Gastrocnemius medialis (tissue), 4 donors: ENCODE measurements at regions of chr7 and their contacts with region 1.

Region 1: DNA sequence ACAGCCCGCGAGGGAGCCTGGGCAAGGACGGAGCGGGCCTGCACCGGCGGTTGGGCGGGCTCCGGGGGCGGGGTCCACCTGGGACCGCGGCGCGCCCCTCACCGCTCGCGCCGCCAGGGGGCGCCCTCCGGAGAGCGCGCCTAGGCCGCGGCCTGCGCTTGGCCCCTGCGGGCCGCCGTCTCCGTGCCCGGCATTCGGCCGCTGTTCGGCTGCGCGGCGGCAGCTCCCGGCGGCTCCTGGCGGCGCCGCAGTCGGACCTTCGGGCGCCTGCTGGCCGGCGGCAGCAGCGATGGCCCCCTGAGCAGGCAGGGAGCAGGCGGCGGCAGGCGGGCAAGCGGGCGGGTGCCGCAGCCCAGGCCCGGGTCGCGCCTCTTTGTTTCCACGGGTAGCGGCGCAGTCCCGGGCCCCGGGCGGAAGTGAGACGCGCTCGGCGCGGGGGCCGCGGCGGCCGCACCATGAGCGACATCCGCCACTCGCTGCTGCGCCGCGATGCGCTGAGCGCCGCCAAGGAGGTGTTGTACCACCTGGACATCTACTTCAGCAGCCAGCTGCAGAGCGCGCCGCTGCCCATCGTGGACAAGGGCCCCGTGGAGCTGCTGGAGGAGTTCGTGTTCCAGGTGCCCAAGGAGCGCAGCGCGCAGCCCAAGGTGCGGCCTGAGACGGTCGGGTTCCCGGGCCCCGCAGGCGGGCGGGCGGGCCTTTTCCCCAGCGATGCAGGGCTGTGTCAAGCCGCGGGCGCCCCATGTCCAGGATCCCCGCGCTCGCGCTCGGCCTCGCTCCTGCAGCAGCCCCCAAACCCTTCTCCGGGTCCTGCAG is at the start of gene INTS15:
- DNase-seq: peak; percentile 18 to 50
- ATAC-seq: peak; percentile 89 to 92
- H3K4me3 ChIP-seq: peak within 1 kb of the TSS; percentile 71 to 90 (median 82)
- H3K27ac ChIP-seq: peak within 1 kb of the TSS; percentile 68 to 90 (median 82)
- H3K4me1 ChIP-seq: peaks cover 14 to 15% of the 10 kb centered on the region in 2 donors
- H3K27me3 ChIP-seq: no peaks in the 10 kb centered on the region
- CTCF ChIP-seq: peak; percentile 52 to 99 (median 98)
- POLR2A ChIP-seq: peak; percentile 80 to 85
- total RNA-seq, gene INTS15: 20.1 to 30.4 (median 26.1) TPM

Region 2: GRCh38 chr7:6577365-6578113 is 12.5 kb before region 1 on chr7 and contains the start of gene ZDHHC4:
- in situ Hi-C with region 1: no loop called
- intact Hi-C with region 1: loop called (anchors 1 kb)
- DNase-seq: peak; percentile 69 to 84
- ATAC-seq: peak; percentile 94 to 97
- H3K4me3 ChIP-seq: peak within 1 kb of the TSS; percentile 70 to 88 (median 77)
- H3K27ac ChIP-seq: peak within 1 kb of the TSS; percentile 85 to 95 (median 92)
- H3K4me1 ChIP-seq: peaks cover 0 to 5% of the 10 kb centered on the region in 2 donors
- H3K27me3 ChIP-seq: no peaks in the 10 kb centered on the region
- CTCF ChIP-seq: no peak
- POLR2A ChIP-seq: peak; percentile 87 to 92
- total RNA-seq, gene ZDHHC4: 52.7 to 88.6 (median 70.5) TPM

Region 3: DNA sequence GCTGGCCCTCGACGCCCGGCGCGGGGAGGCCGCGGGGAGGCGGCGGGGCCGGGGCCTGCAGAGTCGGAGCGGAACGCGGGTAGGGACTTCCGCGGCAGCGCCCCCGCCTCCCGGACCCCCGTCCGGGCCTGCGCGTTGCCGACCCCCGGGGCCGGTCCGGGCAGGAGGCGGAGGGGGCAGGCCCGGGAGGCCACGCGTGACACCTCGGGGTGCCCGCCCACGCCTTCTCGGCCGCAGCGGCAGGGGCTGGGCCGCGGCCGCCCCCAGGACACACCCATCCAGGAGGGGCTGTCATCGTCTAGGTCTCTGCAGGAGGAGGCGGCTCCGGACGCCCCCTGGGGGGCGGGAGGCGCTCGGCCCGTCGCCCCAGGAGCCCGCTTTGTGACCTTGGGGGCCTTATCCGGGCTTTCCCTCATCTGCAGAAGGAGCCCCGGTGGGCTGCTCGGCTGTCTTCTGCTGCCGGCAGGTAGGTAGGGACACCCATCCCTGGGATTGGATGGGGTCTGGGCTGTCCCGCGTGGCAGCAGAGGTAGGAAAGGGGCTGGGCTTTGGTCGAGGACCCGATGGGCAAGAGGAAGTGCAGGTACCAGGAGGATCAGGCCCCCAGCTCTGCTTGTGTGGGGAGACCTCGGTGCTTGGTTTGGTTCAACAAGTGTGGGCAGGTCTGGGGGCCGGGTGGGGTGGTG is 47.6 kb after region 1 on chr7:
- in situ Hi-C with region 1: no loop called
- intact Hi-C with region 1: loop called (anchors 5 kb)
- DNase-seq: no peak
- ATAC-seq: peak; percentile 12 to 21
- H3K4me3 ChIP-seq: peak overlapping the region; percentile 56 to 79 (median 62)
- H3K27ac ChIP-seq: peak overlapping the region; percentile 44 to 72 (median 58)
- H3K4me1 ChIP-seq: peaks cover 8 to 20% of the 10 kb centered on the region in 2 donors
- H3K27me3 ChIP-seq: no peaks in the 10 kb centered on the region
- CTCF ChIP-seq: no peak
- POLR2A ChIP-seq: no peak

Region 4: DNA sequence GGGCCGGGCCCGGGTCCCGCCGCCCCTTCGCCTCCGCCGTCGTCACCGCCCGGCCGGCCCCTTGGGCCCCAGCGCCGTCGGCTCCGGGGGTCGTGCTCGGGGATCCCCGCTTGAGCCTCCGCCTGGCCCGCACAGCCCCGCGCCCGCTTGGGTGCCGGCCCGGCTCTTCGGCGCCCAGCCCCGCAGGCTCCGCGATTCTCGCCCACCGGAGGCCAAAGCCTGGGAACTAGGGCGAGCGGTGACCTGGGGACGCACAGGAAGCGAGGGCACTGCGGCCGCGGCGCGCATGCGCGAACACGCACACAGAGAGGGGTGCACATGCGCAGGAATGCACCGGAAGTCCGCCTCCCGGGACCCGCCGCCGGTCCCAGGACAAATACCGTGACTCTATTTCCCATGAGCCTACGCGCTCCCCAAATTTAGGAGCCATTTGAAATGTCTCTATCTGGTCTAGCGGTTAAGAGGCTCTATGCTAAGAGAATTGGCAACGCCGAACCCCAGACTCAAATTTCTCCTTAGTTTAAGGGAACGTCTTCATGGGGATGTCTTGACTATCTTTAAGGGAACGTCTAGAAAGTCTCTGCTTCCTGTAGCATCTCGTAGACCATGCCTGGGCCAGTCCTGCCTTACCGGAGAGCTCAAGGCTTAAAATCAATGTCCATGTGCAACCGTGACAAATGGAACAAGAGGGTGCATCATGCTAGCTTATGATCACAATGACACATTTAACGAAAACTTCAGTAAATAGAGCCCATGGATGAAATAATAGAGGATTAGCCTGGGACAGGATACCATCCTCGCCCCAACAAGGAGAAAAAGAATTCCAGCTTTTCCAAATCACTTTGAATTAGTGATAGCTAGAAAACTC is 116.9 kb after region 1 on chr7 and contains the start of gene ZNF12:
- in situ Hi-C with region 1: no loop called
- intact Hi-C with region 1: loop called (anchors 2 kb)
- DNase-seq: peak; percentile 93 to 96
- ATAC-seq: peak; percentile 98
- H3K4me3 ChIP-seq: peak within 1 kb of the TSS; percentile 75 to 99 (median 88)
- H3K27ac ChIP-seq: peak within 1 kb of the TSS; percentile 80 to 90 (median 84)
- H3K4me1 ChIP-seq: peaks cover 22 to 23% of the 10 kb centered on the region in 2 donors
- H3K27me3 ChIP-seq: no peaks in the 10 kb centered on the region
- CTCF ChIP-seq: peak in 1 of 5 experiments; percentile 10
- POLR2A ChIP-seq: peak; percentile 63 to 81
- total RNA-seq, gene ZNF12: 4.5 to 8.9 (median 5.3) TPM

Region 5: DNA sequence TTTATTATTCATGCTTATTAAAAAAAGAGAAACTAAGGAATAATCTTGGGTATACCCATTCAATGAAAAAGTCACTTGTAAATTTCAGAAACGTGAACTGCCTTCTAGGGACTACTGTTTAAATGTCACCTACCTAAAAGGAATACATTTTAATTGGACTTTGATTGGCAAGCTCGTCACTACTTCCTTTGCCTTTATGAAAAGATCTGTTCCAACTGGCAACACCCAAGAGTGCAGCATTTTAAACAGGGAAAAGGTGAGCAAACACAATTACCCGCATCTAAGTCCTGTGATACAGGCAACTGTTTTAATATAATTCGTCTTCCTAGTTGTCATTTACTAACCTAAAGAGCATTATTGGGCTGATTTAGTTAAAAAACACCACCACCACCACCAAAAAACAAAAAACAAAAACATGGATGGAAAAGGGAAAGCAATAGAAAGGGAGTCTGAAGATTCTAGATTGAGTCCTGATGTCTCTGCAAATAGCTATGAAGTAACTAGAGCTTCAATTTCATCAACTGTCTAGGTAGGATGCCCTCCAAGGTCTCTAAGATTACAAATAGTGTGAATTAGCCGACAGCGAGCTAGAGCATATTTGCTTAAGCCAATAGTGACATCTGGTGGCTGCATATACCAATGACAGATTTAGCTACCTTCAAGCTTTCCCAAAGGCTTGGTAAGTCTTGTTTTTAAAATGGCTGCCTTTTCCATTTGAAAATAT is 1705.8 kb after region 1 on chr7:
- in situ Hi-C with region 1: no loop called
- intact Hi-C with region 1: loop called (anchors 5 kb)
- DNase-seq: peak; percentile 18 to 32
- ATAC-seq: peak; percentile 99
- H3K4me3 ChIP-seq: no peak overlapping the region
- H3K27ac ChIP-seq: no peak overlapping the region
- H3K4me1 ChIP-seq: peaks cover 0 to 4% of the 10 kb centered on the region in 2 donors
- H3K27me3 ChIP-seq: no peaks in the 10 kb centered on the region
- CTCF ChIP-seq: peak; percentile 52 to 77 (median 74)
- POLR2A ChIP-seq: no peak